ENCODE measurements at regions of chr5 and their contacts with region 1.

Region 1: GRCh38 chr5:73448463-73449136 is at the start of gene FOXD1:
- DNase-seq: peak; percentile 81
- ATAC-seq: peak; percentile 81
- H3K4me3 Mint-ChIP-seq: peak within 1 kb of the TSS; percentile 78
- H3K27ac Mint-ChIP-seq: no peak within 1 kb of the TSS
- H3K4me1 Mint-ChIP-seq: peaks cover 15% of the 10 kb centered on the region
- H3K27me3 Mint-ChIP-seq: peaks cover 71% of the 10 kb centered on the region
- CTCF ChIP-seq: no peak
- total RNA-seq, gene FOXD1: 0.99 to 1.5 TPM

Region 2: GRCh38 chr5:73298772-73299630 is 149.6 kb before region 1 on chr5:
- CTCF ChIA-PET with region 1: interaction called, 17 read pairs
- POLR2A ChIA-PET with region 1: interaction called, 4 read pairs
- intact Hi-C with region 1: loop called (anchors 2 kb)
- DNase-seq: no peak
- ATAC-seq: peak; percentile 39
- H3K4me3 Mint-ChIP-seq: no peak overlapping the region
- H3K27ac Mint-ChIP-seq: no peak overlapping the region
- H3K4me1 Mint-ChIP-seq: peaks cover 17% of the 10 kb centered on the region
- H3K27me3 Mint-ChIP-seq: peaks cover 81% of the 10 kb centered on the region
- CTCF ChIP-seq: peak; percentile 35

Region 3: GRCh38 chr5:73381590-73382400 is 66.8 kb before region 1 on chr5:
- CTCF ChIA-PET with region 1: interaction called, 4 read pairs
- POLR2A ChIA-PET with region 1: interaction called, 3 read pairs
- intact Hi-C with region 1: loop called (anchors 5 kb)
- DNase-seq: no peak
- ATAC-seq: no peak
- H3K4me3 Mint-ChIP-seq: peak overlapping the region; percentile 24
- H3K27ac Mint-ChIP-seq: no peak overlapping the region
- H3K4me1 Mint-ChIP-seq: peaks cover 15% of the 10 kb centered on the region
- H3K27me3 Mint-ChIP-seq: peaks cover 66% of the 10 kb centered on the region
- CTCF ChIP-seq: no peak

Region 4: GRCh38 chr5:73464016-73464745 is 15.6 kb after region 1 on chr5:
- CTCF ChIA-PET with region 1: interaction called, 16 read pairs
- POLR2A ChIA-PET with region 1: no interaction called
- intact Hi-C with region 1: no loop called
- DNase-seq: no peak
- ATAC-seq: no peak
- H3K4me3 Mint-ChIP-seq: no peak overlapping the region
- H3K27ac Mint-ChIP-seq: no peak overlapping the region
- H3K4me1 Mint-ChIP-seq: no peaks in the 10 kb centered on the region
- H3K27me3 Mint-ChIP-seq: peaks cover 21% of the 10 kb centered on the region
- CTCF ChIP-seq: no peak

Region 5: GRCh38 chr5:73485715-73486114 is 37.1 kb after region 1 on chr5:
- CTCF ChIA-PET with region 1: no interaction called
- POLR2A ChIA-PET with region 1: no interaction called
- intact Hi-C with region 1: no loop called
- DNase-seq: no peak
- ATAC-seq: no peak
- H3K4me3 Mint-ChIP-seq: no peak overlapping the region
- H3K27ac Mint-ChIP-seq: no peak overlapping the region
- H3K4me1 Mint-ChIP-seq: no peaks in the 10 kb centered on the region
- H3K27me3 Mint-ChIP-seq: peaks cover 15% of the 10 kb centered on the region
- CTCF ChIP-seq: no peak

Region 6: DNA sequence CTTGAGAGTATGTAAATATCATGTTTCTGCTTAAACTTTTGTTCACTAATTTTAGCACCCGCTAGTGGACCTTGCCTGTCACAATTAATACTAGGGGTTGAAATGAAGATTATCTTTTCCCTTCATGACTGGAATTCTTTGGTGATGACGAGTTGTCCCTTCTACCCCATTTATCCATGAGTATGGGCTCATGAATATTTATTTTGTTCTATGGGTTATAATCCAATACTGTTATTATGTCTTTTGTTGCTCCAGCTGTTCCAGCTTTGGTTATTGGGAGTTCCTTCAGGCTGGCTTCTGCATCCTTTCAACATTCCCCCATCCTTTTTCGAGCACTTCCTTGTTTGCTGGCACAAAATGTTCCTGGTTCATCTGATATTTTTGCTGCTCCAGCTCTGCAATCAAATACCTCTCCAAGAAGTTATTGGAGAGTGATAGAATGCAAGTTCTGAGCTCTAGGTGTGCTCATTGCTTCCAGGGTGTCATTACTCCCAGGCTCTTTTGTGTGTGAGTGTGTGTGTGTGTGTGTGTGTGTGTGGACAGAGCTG is 157.7 kb after region 1 on chr5:
- CTCF ChIA-PET with region 1: no interaction called
- POLR2A ChIA-PET with region 1: no interaction called
- intact Hi-C with region 1: no loop called
- DNase-seq: no peak
- ATAC-seq: no peak
- H3K4me3 Mint-ChIP-seq: no peak overlapping the region
- H3K27ac Mint-ChIP-seq: no peak overlapping the region
- H3K4me1 Mint-ChIP-seq: no peaks in the 10 kb centered on the region
- H3K27me3 Mint-ChIP-seq: peaks cover 9% of the 10 kb centered on the region
- CTCF ChIP-seq: no peak